GM12878 (cell line): ENCODE measurements at regions of chr16 and their contacts with region 1.

Region 1: DNA sequence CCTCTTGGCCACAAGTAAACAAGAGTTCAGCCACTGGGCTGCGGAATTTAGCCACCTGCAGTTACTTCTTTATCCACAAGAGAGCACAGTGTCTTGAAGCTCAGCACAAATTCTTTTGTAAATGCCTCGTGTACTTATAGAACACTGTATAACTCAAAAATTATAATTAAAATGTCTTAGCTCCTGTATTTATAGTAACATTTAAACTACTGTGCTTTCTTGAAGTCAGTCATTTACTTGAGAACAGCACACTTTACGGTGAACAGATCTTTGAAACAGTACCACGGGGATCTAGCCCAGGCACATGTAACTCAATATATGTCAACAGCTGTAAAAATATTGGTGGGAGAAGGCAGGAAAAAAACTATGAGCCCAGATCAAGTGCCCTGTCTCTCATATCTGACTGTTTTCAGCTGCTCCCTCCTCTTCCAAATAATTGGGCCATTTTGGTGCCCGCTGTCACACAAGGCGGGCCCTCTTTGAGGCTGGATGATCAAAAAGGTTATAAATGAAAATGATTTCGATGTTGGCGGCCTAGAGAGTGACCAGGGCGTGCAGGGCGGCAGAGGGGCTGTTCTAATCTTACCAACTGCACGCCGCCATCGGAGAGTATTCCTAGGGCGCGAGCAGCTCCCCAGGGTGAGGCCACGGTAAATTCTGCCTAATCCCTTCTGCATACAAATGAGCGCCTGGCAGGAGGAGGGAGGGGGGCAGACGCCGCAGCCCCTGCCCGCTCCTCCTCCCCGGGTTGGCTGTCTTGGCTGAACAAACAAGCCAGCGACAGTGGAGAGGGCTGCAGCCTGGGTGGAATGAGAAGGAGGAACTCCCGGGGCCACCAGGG is 183.2 kb downstream of the C16orf78 start:
- DNase-seq: no peak
- ATAC-seq: peak; percentile 57; the same call in 2 of the 3 replicates
- H3K4me3 ChIP-seq: no peak overlapping the region
- H3K27ac ChIP-seq: no peak overlapping the region
- H3K4me1 ChIP-seq: 0 out of 2 replicates have a peak, but pooled peaks cover 5% of the 10 kb centered on the region
- H3K27me3 ChIP-seq: no peaks in the 10 kb centered on the region
- CTCF ChIP-seq: peak; percentile 9 to 55 (median 32); a peak in 2 of 6 replicates
- EP300 ChIP-seq: no peak
- POLR2A ChIP-seq: no peak
- RAD21 ChIP-seq: peak; percentile 45

Region 2: GRCh38 chr16:49280105-49280741 is 276.6 kb before region 1 on chr16:
- CTCF ChIA-PET with region 1: no interaction called
- POLR2A ChIA-PET with region 1: no interaction called
- RAD21 ChIA-PET with region 1: no interaction called
- SMC1A ChIA-PET with region 1: no interaction called
- in situ Hi-C with region 1: no loop called
- intact Hi-C with region 1: no loop called
- DNase-seq: no peak
- ATAC-seq: peak; percentile 34; the same call in 1 of the 3 replicates
- H3K4me3 ChIP-seq: no peak overlapping the region
- H3K27ac ChIP-seq: no peak overlapping the region
- H3K4me1 ChIP-seq: no peaks in the 10 kb centered on the region
- H3K27me3 ChIP-seq: peaks cover 25 to 28% of the 10 kb centered on the region in 2 experiments
- CTCF ChIP-seq: no peak
- EP300 ChIP-seq: no peak
- POLR2A ChIP-seq: no peak
- RAD21 ChIP-seq: no peak

Region 3: GRCh38 chr16:49503256-49504022 is 53.4 kb before region 1 on chr16:
- CTCF ChIA-PET with region 1: no interaction called
- POLR2A ChIA-PET with region 1: no interaction called
- RAD21 ChIA-PET with region 1: no interaction called
- SMC1A ChIA-PET with region 1: no interaction called
- in situ Hi-C with region 1: loop called (anchors 5 kb)
- intact Hi-C with region 1: no loop called
- DNase-seq: no peak
- ATAC-seq: peak; percentile 85
- H3K4me3 ChIP-seq: no peak overlapping the region
- H3K27ac ChIP-seq: no peak overlapping the region
- H3K4me1 ChIP-seq: peaks cover 14% of the 10 kb centered on the region
- H3K27me3 ChIP-seq: no peaks in the 10 kb centered on the region
- CTCF ChIP-seq: no peak
- EP300 ChIP-seq: no peak
- POLR2A ChIP-seq: no peak
- RAD21 ChIP-seq: no peak

Region 4: GRCh38 chr16:49528060-49528865 is 28.6 kb before region 1 on chr16:
- CTCF ChIA-PET with region 1: no interaction called
- POLR2A ChIA-PET with region 1: no interaction called
- RAD21 ChIA-PET with region 1: no interaction called
- SMC1A ChIA-PET with region 1: no interaction called
- in situ Hi-C with region 1: no loop called
- intact Hi-C with region 1: no loop called
- DNase-seq: no peak
- ATAC-seq: no peak; the same call in 2 of the 3 replicates
- H3K4me3 ChIP-seq: peak overlapping the region; percentile 3; the same call in 1 of the 2 replicates
- H3K27ac ChIP-seq: no peak overlapping the region
- H3K4me1 ChIP-seq: peaks cover 8% of the 10 kb centered on the region
- H3K27me3 ChIP-seq: no peaks in the 10 kb centered on the region; a peak in 1 of 4 replicates
- CTCF ChIP-seq: no peak
- EP300 ChIP-seq: no peak
- POLR2A ChIP-seq: no peak
- RAD21 ChIP-seq: no peak